MCF 10A (cell line): ENCODE measurements at regions of chr6 and their contacts with region 1.

Region 1: DNA sequence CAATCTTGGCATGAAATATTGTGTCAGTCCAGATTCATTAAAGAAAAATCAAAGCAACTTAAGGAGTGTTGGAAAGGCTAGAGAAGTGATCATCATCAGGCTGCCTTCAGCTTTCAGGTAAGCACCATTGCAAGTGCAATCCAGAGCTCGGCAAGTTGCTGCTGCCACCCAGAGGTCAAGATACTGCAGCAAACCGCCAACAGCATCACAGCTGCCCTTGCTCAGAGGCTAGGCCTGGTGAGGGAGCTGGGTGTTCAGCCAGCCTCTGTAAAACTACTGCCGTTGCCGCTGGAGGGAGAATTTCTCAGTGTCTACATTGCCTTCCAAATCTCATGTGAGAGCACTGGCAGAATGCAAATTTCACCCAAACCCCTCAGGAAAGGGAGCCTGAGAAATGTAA is 5.8 kb upstream of the SYNE1 start:
- DNase-seq: peak; percentile 70
- H3K4me3 Mint-ChIP-seq: no peak overlapping the region
- H3K27ac Mint-ChIP-seq: no peak overlapping the region
- H3K4me1 Mint-ChIP-seq: peaks cover 2% of the 10 kb centered on the region
- H3K27me3 Mint-ChIP-seq: peaks cover 4% of the 10 kb centered on the region
- CTCF ChIP-seq: peak; percentile 72

Region 2: GRCh38 chr6:152484806-152485205 is 158.2 kb before region 1 on chr6:
- CTCF ChIA-PET with region 1: interaction called, 35 read pairs
- POLR2A ChIA-PET with region 1: interaction called, 4 read pairs
- intact Hi-C with region 1: loop called (anchors 1 kb)
- DNase-seq: no peak
- H3K4me3 Mint-ChIP-seq: no peak overlapping the region
- H3K27ac Mint-ChIP-seq: no peak overlapping the region
- H3K4me1 Mint-ChIP-seq: no peaks in the 10 kb centered on the region
- H3K27me3 Mint-ChIP-seq: no peaks in the 10 kb centered on the region
- CTCF ChIP-seq: no peak

Region 3: GRCh38 chr6:152503546-152503945 is 139.4 kb before region 1 on chr6:
- CTCF ChIA-PET with region 1: interaction called, 12 read pairs
- POLR2A ChIA-PET with region 1: no interaction called
- intact Hi-C with region 1: no loop called
- DNase-seq: peak; percentile 24
- H3K4me3 Mint-ChIP-seq: no peak overlapping the region
- H3K27ac Mint-ChIP-seq: no peak overlapping the region
- H3K4me1 Mint-ChIP-seq: no peaks in the 10 kb centered on the region
- H3K27me3 Mint-ChIP-seq: no peaks in the 10 kb centered on the region
- CTCF ChIP-seq: no peak

Region 4: DNA sequence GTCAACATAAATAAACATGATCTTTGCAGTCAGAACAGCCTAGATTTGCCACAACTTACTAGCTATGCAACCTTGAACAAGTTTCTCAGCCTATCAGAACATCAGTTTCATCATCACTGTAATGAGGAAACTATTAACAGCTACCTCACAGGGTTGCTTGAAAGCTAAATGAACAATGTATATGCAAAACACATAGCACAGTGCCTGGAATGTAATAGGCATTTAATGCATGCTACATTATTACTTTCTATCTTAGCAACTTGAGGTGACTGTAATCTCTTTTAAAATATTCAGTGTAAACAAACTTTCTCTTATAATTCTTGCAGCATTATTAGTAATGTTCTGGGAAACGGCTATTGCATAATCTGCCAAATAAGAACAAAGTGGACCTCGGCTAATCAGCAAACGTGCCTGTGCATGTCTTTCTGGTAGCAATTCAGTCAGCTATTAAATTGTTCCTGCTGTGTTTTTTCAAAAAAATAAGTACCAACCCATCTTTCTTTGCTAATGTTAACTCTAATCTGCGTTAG is 67.3 kb before region 1 on chr6:
- CTCF ChIA-PET with region 1: interaction called, 13 read pairs
- POLR2A ChIA-PET with region 1: interaction called, 7 read pairs
- intact Hi-C with region 1: no loop called
- DNase-seq: peak; percentile 89
- H3K4me3 Mint-ChIP-seq: peak overlapping the region; percentile 36
- H3K27ac Mint-ChIP-seq: peak overlapping the region; percentile 94
- H3K4me1 Mint-ChIP-seq: peaks cover 50% of the 10 kb centered on the region
- H3K27me3 Mint-ChIP-seq: no peaks in the 10 kb centered on the region
- CTCF ChIP-seq: no peak

Region 5: DNA sequence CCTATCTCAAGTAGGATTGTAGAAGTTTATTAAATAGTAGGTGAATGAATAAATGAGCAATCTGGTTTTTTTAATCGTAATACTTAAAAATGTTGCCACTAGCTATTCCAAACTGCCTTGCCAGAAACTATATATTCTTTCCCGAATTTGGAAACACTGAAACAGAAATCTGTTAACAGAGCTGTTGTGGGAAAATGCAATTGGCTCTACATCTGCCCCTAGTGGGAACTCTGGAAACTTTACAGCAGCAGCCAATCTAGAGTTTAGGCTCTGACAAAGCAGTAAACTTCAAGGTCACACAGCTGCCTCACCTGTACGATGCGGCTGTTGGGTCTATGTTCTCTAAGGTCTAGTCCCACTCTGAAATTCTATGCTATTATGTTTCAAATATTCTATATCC is 47.5 kb before region 1 on chr6:
- CTCF ChIA-PET with region 1: interaction called, 10 read pairs
- POLR2A ChIA-PET with region 1: no interaction called
- intact Hi-C with region 1: no loop called
- DNase-seq: peak; percentile 19
- H3K4me3 Mint-ChIP-seq: no peak overlapping the region
- H3K27ac Mint-ChIP-seq: no peak overlapping the region
- H3K4me1 Mint-ChIP-seq: peaks cover 7% of the 10 kb centered on the region
- H3K27me3 Mint-ChIP-seq: no peaks in the 10 kb centered on the region
- CTCF ChIP-seq: peak; percentile 34

Region 6: GRCh38 chr6:152630832-152631231 is 12.2 kb before region 1 on chr6:
- CTCF ChIA-PET with region 1: interaction called, 29 read pairs
- POLR2A ChIA-PET with region 1: interaction called, 3 read pairs
- intact Hi-C with region 1: no loop called
- DNase-seq: no peak
- H3K4me3 Mint-ChIP-seq: no peak overlapping the region
- H3K27ac Mint-ChIP-seq: no peak overlapping the region
- H3K4me1 Mint-ChIP-seq: no peaks in the 10 kb centered on the region
- H3K27me3 Mint-ChIP-seq: no peaks in the 10 kb centered on the region
- CTCF ChIP-seq: no peak

Region 7: DNA sequence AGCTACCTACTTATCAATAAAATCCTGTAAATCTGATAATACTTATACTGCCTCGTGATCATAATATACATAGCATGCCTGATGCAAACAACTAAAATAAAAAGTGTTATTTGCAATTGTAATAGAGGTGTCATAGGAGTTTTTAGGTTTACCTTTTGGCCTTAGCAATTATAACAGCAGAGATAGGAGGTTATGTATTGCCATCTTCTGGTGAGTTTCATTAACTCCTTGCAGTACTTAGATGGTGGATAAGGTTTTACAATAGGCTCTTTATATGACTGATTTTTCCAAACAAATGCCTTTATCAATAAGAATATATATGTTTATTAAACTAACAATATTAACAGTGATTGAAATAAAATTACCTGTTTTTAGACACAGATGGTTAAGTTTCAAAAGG is 26.9 kb after region 1 on chr6:
- CTCF ChIA-PET with region 1: interaction called, 18 read pairs
- POLR2A ChIA-PET with region 1: no interaction called
- intact Hi-C with region 1: no loop called
- DNase-seq: peak; percentile 42
- H3K4me3 Mint-ChIP-seq: no peak overlapping the region
- H3K27ac Mint-ChIP-seq: no peak overlapping the region
- H3K4me1 Mint-ChIP-seq: no peaks in the 10 kb centered on the region
- H3K27me3 Mint-ChIP-seq: no peaks in the 10 kb centered on the region
- CTCF ChIP-seq: peak; percentile 42

Region 8: DNA sequence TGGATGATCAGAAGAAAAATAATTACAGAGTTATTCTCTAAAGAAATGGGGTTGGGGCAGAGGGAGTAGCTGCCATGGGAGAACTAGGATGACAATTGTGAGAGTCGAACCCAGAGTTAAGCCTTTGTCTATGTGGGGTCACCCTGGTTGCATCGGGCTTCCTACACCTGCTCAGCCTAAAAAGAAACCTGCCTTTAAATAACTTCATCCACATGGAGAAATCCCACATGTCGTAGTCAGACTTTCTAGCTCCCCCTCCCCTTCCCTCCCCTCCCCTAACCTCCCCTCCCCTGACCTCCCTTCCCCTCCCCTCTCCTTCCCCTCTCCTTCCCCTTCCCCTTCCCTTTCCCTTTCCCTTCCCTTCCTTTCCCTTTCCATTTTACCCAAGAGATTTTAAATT is 122.3 kb after region 1 on chr6:
- CTCF ChIA-PET with region 1: no interaction called
- POLR2A ChIA-PET with region 1: no interaction called
- intact Hi-C with region 1: no loop called
- DNase-seq: no peak
- H3K4me3 Mint-ChIP-seq: no peak overlapping the region
- H3K27ac Mint-ChIP-seq: no peak overlapping the region
- H3K4me1 Mint-ChIP-seq: no peaks in the 10 kb centered on the region
- H3K27me3 Mint-ChIP-seq: no peaks in the 10 kb centered on the region
- CTCF ChIP-seq: no peak

Region 9: DNA sequence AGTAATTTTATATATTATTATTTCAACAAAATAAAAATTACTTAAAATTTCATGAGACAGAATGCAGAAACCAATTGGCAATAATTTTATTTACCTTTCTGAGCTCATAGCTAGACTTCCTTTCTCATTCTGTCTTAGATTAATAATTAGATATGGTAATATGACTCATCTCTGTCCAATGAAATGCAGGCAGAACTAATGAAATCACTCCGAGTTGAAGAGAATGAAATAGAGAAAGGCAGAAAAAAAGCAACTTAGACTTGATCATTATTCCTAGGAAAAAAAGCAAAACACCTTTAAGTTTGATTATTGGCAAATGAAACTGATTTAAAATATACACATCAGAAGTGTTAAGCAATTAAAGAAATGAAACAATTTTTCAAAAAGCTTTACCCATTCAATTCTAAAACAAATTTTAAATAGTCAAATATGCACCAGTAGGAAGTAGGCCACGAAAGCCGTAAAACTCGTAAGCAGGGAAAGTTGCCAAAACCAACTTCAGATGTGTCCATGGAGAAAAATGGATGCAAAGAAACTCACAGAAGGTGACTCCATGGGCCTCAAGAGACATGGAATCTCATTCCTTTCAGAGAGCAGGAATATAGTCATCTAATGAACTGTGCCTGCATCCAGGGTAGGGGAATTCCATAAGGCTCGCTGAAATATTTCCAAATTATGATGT is 781.9 kb after region 1 on chr6:
- CTCF ChIA-PET with region 1: no interaction called
- POLR2A ChIA-PET with region 1: no interaction called
- intact Hi-C with region 1: no loop called
- DNase-seq: no peak
- H3K4me3 Mint-ChIP-seq: no peak overlapping the region
- H3K27ac Mint-ChIP-seq: no peak overlapping the region
- H3K4me1 Mint-ChIP-seq: peaks cover 9% of the 10 kb centered on the region
- H3K27me3 Mint-ChIP-seq: no peaks in the 10 kb centered on the region
- CTCF ChIP-seq: no peak